Activated CD8-positive, alpha-beta T cell treated with anti-CD3 and anti-CD28 coated beads for 36 hours (primary cell): ENCODE measurements at regions of chr5 and their contacts with region 1.

Region 1: DNA sequence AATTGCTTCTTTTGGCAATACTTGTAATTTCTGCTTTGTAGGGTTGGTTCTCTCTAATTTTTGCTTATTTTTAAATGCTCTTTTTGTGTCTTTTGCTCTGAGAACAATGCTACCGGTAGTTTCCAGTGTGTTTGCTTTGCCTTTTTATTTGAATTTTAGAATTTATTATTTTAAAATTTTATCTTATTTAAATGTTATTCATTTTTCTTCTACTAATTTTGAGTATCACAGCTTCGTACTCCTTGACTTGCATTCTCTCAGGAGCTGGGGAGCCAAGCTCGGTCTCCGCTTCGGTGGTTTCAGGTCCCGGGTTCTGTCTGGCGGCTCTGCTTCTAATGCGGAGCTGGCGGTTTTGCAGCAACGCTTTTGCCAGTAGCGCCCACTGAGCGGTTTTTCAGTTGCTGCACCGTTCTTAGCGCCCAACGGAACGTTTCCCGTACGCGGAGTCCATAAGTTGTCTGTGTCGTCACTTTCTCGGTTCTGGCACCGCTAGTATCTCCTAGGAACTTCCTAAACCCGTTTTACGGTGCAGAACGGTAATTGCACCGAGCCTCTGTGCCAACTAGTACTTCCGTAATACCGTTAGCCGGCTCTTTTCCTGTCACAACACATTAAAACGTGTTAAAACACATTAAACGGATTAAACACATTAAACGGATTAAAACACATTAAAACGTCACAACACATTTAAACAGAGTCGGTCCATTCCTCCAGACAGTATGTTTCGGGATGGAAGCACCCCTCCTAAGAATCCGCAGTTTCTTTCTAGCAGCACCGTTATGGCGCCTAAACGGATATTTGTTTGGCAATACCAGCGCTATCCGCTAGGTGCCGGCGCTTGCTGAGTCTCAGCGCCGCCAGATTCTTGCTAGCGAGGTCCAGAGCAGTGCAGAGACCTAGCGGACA is 45.6 kb downstream of the ANXA2R start:
- DNase-seq: peak; percentile 94
- ATAC-seq: peak; percentile 70
- H3K4me3 Mint-ChIP-seq: peak overlapping the region; percentile 90
- H3K27ac Mint-ChIP-seq: peak overlapping the region; percentile 99
- H3K4me1 Mint-ChIP-seq: peaks cover 20% of the 10 kb centered on the region
- H3K27me3 Mint-ChIP-seq: no peaks in the 10 kb centered on the region
- CTCF ChIP-seq: peak; percentile 85

Region 2: DNA sequence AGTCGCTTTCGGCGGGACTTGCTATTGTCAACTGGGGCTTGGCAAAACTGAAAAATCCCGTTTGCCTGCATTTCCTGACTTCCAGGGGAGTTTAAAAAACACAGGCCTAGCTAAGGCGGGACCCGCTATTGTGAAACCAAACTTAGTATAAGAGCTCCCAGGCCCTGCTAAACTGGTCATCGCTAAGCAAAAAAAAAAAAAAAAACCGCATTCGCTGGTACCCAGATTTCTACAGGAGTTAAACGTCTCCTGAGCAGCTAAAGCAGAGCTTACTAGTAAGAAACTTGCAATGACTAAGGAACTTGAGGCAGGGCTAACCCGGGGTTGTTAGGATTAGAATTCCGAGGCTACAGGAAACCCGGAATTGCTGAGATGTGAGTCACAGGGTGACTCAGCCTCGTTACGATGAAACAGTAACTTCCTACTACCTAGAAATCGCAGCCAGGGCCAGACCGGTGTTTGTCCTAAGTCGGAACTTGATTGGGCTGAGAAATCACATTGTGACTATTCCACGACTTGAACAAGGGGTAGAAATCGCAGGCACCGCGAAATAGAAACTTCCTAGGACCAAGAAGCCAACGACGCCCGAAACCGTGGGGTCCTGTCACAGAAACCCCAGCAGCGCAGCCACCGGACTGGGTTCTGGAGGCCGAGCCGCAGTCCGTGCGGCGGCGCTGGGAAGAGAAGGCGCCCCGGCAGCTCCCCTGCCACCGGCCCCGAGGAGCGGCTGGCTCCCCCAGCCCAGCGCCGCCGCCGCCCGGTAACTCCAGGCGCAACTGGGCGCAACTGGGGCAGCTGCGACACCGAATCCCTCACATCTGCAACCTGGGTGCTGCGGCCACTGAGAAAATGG is 43.8 kb before region 1 on chr5:
- CTCF ChIA-PET with region 1: interaction called, 37 read pairs
- POLR2A ChIA-PET with region 1: interaction called, 77 read pairs
- intact Hi-C with region 1: loop called (anchors 1 kb)
- DNase-seq: peak; percentile 82
- ATAC-seq: peak; percentile 46
- H3K4me3 Mint-ChIP-seq: peak overlapping the region; percentile 89
- H3K27ac Mint-ChIP-seq: peak overlapping the region; percentile 97
- H3K4me1 Mint-ChIP-seq: peaks cover 19% of the 10 kb centered on the region
- H3K27me3 Mint-ChIP-seq: no peaks in the 10 kb centered on the region
- CTCF ChIP-seq: no peak

Region 3: DNA sequence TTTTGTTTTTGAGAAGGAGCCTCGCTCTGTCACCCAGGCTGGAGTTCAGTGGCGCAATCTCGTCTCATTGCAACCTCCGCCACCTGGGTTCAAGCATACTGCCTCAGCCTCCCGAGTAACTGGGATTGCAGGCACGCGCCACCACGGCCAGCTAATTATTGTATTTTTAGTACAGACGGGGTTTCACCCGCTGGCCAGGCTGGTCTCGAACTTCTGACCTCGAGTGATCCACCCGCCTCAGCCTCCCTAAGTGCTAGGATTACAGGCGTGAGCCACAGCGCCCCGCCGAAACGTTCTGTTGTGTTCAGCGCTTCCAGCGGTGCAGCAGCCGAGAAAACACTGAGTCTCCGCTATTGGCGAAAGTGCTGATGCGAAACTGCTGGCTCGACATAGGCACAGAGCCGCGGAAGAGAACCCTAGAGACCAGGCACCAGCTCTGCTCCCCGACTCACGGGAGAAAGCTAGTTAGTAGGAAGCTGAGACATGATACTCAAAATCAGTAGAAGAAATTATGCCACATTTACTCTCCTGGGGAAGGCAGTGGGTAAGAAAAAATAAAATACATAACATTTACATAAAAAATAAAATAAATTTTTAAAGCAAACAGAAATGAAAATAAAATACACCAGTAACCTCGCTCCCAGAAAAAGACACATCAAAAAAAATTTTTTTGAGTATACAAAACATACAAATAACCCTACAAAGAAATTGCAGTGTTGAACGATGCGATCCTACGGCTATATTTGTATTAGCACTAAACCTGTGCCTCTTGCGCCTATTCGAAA is 14.1 kb after region 1 on chr5:
- CTCF ChIA-PET with region 1: interaction called, 112 read pairs
- POLR2A ChIA-PET with region 1: interaction called, 169 read pairs
- intact Hi-C with region 1: loop called (anchors 1 kb)
- DNase-seq: peak; percentile 95
- ATAC-seq: peak; percentile 70
- H3K4me3 Mint-ChIP-seq: peak overlapping the region; percentile 93
- H3K27ac Mint-ChIP-seq: peak overlapping the region; percentile 99
- H3K4me1 Mint-ChIP-seq: peaks cover 30% of the 10 kb centered on the region
- H3K27me3 Mint-ChIP-seq: no peaks in the 10 kb centered on the region
- CTCF ChIP-seq: no peak

Region 4: DNA sequence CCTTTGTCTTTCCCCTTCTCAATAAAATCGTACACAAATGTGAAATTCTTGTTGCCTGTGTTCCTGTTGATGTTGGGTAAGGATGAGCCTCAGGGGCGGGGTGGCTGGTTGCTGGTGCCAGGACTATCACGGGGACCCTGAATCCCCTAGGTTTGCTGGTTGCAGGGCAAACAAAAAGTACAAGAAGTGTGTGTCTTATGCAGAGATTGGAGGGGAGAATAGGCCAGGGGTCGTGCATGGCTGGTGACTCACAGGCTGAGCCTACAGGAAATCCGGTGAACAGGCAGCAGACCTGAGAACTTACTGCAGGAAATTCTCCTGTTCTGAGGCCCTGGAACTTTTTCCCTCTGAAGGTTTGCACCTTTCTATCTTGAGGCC is 40.1 kb after region 1 on chr5:
- CTCF ChIA-PET with region 1: interaction called, 63 read pairs
- POLR2A ChIA-PET with region 1: interaction called, 80 read pairs
- intact Hi-C with region 1: no loop called
- DNase-seq: peak; percentile 45
- ATAC-seq: no peak
- H3K4me3 Mint-ChIP-seq: peak overlapping the region; percentile 22
- H3K27ac Mint-ChIP-seq: peak overlapping the region; percentile 45
- H3K4me1 Mint-ChIP-seq: peaks cover 48% of the 10 kb centered on the region
- H3K27me3 Mint-ChIP-seq: no peaks in the 10 kb centered on the region
- CTCF ChIP-seq: no peak

Region 5: GRCh38 chr5:43040287-43041098 is 46.0 kb after region 1 on chr5 and contains the start of gene ANXA2R:
- CTCF ChIA-PET with region 1: interaction called, 63 read pairs
- POLR2A ChIA-PET with region 1: interaction called, 80 read pairs
- intact Hi-C with region 1: loop called (anchors 1 kb)
- DNase-seq: peak; percentile 97
- ATAC-seq: peak; percentile 67
- H3K4me3 Mint-ChIP-seq: peak within 1 kb of the TSS; percentile 81
- H3K27ac Mint-ChIP-seq: peak within 1 kb of the TSS; percentile 98
- H3K4me1 Mint-ChIP-seq: peaks cover 38% of the 10 kb centered on the region
- H3K27me3 Mint-ChIP-seq: no peaks in the 10 kb centered on the region
- CTCF ChIP-seq: peak; percentile 76
- total RNA-seq, gene ANXA2R: 8.0 to 10.4 TPM

Region 6: DNA sequence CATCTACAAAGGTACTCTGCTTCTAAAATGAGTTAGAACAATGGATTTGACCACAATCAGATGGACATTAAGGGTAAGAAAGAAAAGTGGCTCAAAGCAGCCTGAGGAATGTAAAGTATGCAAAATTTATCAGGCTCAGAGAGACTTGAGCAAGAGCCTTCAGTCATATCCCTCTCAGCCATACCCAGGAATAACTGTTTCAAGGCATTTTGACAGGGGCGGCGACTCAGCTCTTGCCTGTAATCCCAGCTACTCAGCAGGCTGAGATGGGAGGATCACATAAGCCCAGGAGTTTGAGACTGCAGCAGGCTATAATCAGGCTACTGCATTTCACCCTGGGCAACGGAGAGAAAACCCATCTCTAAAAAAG is 84.5 kb after region 1 on chr5:
- CTCF ChIA-PET with region 1: no interaction called
- POLR2A ChIA-PET with region 1: no interaction called
- intact Hi-C with region 1: no loop called
- DNase-seq: no peak
- ATAC-seq: no peak
- H3K4me3 Mint-ChIP-seq: no peak overlapping the region
- H3K27ac Mint-ChIP-seq: no peak overlapping the region
- H3K4me1 Mint-ChIP-seq: peaks cover 13% of the 10 kb centered on the region
- H3K27me3 Mint-ChIP-seq: no peaks in the 10 kb centered on the region
- CTCF ChIP-seq: no peak